AG04449 (cell line): ENCODE measurements at regions of chr7 and their contacts with region 1.

Region 1: DNA sequence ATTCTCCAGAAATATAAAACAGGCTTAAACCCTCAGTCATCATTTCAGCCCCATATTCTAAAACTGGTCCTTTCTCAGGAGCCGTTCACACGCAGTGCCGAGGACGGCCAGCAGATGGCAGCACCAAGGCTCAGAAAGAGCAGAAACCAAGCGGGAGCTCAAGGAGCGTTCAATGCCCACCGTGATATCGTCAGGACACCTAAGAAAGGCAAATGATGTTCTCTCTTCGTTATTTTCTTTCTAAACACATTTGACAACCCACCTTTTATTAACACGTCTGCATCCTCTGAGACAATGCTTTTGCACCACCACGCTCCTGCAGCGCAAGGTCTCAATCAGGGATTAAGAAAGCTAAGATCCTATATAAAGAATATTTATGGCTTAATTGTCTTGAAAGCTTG is 45.7 kb upstream of the RBM33 start:
- DNase-seq: no peak
- H3K4me3 ChIP-seq: no peak overlapping the region
- CTCF ChIP-seq: peak; percentile 90

Region 2: DNA sequence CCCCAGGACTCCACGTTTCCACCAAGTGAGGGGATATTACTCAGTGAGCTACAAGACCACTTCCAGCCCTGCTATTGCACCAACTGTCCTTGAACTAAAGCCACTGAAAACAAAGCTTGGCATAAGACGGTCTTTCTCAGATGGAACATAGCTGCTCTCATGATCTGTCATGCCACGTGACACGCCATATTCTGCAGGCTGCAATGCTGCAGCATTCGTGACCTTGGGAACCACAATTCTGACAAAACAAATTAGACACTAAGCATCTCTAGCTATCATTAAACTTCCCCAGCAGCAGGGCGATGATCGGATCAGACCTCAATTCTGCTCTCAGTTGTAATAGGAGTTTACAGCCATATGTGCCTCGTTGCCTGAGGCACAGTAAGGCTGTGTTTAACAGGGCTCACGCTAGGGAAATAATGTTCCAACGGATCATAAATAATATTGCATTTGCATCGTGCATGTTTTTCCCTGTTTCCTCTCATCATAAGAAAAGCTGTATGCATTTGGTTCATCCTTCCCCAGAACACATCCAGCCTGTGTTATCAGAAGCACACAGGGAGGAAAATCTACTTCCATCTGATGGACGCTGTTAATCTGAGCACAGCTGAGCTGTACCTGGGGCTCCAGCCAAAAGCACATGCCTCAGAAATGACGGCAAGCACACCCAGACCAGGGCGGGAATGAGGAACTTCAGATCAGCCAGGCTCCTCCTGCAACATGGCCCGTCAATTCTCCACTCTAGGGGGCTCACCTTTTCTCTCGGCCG is 13.9 kb before region 1 on chr7:
- CTCF ChIA-PET with region 1: interaction called, 25 read pairs
- POLR2A ChIA-PET with region 1: no interaction called
- DNase-seq: peak; percentile 31
- H3K4me3 ChIP-seq: no peak overlapping the region
- CTCF ChIP-seq: no peak

Region 3: GRCh38 chr7:155624412-155624811 is 25.6 kb after region 1 on chr7:
- CTCF ChIA-PET with region 1: interaction called, 10 read pairs
- POLR2A ChIA-PET with region 1: no interaction called
- DNase-seq: no peak
- H3K4me3 ChIP-seq: no peak overlapping the region
- CTCF ChIP-seq: no peak

Region 4: GRCh38 chr7:155702616-155703015 is 103.8 kb after region 1 on chr7:
- CTCF ChIA-PET with region 1: interaction called, 47 read pairs
- POLR2A ChIA-PET with region 1: no interaction called
- DNase-seq: no peak
- H3K4me3 ChIP-seq: no peak overlapping the region
- CTCF ChIP-seq: no peak

Region 5: GRCh38 chr7:155722118-155722517 is 123.3 kb after region 1 on chr7:
- CTCF ChIA-PET with region 1: interaction called, 11 read pairs
- POLR2A ChIA-PET with region 1: no interaction called
- DNase-seq: no peak
- H3K4me3 ChIP-seq: no peak overlapping the region
- CTCF ChIP-seq: no peak

Region 6: DNA sequence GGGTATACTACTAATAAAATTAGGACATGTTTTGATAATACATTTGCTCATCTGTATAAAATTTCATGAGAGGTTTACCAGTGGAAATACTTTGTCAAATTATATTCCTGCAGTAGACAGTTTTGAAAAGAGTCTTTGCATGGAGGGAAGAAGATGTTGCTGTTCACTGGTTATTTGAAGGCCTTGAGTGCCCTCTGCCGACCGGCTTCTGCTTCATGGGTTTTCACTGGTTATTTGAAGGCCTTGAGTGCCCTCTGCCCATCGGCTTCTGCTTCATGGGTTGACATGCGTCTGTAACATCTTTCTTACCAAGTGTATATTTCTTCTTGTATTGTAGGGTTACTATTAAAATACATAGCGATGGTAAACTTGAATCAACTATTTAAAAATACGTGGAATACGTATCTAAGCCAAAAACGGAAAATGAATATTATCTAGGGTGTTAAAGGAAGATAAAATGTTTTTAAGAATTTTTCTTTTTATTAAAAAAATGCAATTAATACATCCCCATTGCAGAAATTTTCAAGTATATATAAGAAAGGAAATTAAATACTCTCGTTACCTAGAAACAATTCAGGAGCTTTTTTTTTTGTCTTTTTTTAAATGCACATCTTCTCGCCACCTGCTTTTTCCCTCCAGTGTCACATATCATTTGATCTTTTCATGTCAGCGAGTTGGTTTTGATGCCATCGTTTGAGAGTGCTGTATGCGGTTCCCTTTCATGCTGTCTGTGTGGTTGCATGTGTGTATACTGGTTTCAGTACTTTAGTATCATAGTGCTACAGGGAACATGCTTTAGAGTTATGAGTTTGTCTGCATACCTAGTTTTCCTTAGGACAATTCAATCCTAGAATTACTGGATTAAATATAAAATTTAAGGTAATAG is 140.1 kb after region 1 on chr7:
- CTCF ChIA-PET with region 1: interaction called, 410 read pairs
- POLR2A ChIA-PET with region 1: no interaction called
- DNase-seq: peak; percentile 24
- H3K4me3 ChIP-seq: no peak overlapping the region
- CTCF ChIP-seq: peak; percentile 80

Region 7: DNA sequence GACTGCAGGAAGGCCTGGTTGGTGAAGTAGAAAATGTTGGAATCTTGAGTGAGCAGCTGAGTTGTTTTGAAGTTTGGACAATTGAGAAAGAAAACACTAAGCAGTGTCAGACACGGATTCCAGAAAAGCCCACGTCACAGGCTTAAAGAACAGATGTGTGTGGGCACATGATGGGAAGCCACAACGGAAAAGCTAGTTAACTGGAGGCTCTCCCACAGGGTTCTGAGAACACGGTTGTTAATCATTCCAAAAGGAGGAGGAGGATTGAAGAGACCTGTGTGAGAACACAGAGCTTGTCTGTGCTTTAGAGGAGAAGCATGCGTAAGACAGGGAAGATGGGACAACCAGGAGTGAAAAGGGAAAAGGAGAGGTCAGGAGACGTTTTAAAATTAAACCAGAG is 170.9 kb after region 1 on chr7:
- CTCF ChIA-PET with region 1: interaction called, 189 read pairs
- POLR2A ChIA-PET with region 1: no interaction called
- DNase-seq: peak; percentile 73
- H3K4me3 ChIP-seq: no peak overlapping the region
- CTCF ChIP-seq: no peak